ENCODE measurements at regions of chr10 and their contacts with region 1.

Region 1: GRCh38 chr10:97498076-97498840 is at the start of gene MMS19:
- DNase-seq: peak; percentile 99 to 100
- H3K4me3 ChIP-seq: peak within 1 kb of the TSS; percentile 71
- H3K4me3 Mint-ChIP-seq: peak within 1 kb of the TSS; percentile 91
- H3K27ac Mint-ChIP-seq: peak within 1 kb of the TSS; percentile 91
- H3K4me1 ChIP-seq: peaks cover 23% of the 10 kb centered on the region
- H3K4me1 Mint-ChIP-seq: peaks cover 25% of the 10 kb centered on the region
- H3K27me3 ChIP-seq: no peaks in the 10 kb centered on the region
- H3K27me3 Mint-ChIP-seq: no peaks in the 10 kb centered on the region
- CTCF ChIP-seq: no peak
- total RNA-seq, gene MMS19: 105 and 112 TPM in 2 replicates

Region 2: DNA sequence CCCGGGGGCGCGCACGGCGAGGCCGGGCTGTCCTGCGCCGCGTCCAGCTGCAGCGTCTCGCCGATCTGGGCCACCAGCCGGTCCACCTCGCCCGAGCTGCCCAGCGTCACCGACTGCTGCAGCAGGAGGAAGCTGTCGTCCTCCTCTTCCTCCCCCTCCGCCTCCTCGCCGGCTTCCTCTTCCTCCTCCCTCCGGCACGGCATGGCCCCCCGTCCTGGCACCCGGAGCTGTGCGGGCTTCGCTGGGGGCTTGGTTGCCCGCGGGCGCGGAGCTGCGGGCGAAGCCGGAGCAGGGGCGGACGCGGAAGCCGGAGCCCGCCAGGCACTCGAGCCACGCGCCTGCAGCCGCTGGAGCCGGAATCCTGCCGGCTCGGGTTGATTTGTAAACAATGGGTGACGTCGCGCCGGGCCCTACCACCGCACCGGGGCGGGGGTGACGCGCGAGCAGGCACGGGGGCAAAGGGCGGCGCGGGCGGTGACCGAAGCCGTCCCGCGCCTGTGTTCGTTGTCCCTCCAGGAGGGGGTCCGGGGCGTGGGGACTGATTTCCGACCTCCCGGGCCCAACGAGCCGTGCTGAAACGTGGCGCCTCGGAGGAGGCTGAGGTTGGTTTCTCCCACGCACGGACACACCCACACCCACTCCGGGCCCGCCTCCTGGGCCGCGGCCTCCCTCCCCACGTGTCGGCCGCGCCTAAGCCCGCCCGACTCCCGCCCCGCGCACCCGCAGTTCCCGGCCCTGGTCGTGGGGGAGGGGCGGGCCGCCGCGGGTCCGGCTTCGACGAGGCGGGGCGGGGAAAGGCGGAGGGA is 163.7 kb before region 1 on chr10 and contains the start of gene FRAT2:
- CTCF ChIA-PET with region 1: no interaction called
- POLR2A ChIA-PET with region 1: interaction called, 3 read pairs
- intact Hi-C with region 1: loop called (anchors 5 kb)
- DNase-seq: peak; percentile 91 to 93
- H3K4me3 ChIP-seq: peak within 1 kb of the TSS; percentile 99
- H3K4me3 Mint-ChIP-seq: peak within 1 kb of the TSS; percentile 78
- H3K27ac Mint-ChIP-seq: peak within 1 kb of the TSS; percentile 92
- H3K4me1 ChIP-seq: peaks cover 21% of the 10 kb centered on the region
- H3K4me1 Mint-ChIP-seq: peaks cover 27% of the 10 kb centered on the region
- H3K27me3 ChIP-seq: no peaks in the 10 kb centered on the region
- H3K27me3 Mint-ChIP-seq: no peaks in the 10 kb centered on the region
- CTCF ChIP-seq: no peak
- total RNA-seq, gene FRAT2: 16.6 and 18.8 TPM in 2 replicates

Region 3: DNA sequence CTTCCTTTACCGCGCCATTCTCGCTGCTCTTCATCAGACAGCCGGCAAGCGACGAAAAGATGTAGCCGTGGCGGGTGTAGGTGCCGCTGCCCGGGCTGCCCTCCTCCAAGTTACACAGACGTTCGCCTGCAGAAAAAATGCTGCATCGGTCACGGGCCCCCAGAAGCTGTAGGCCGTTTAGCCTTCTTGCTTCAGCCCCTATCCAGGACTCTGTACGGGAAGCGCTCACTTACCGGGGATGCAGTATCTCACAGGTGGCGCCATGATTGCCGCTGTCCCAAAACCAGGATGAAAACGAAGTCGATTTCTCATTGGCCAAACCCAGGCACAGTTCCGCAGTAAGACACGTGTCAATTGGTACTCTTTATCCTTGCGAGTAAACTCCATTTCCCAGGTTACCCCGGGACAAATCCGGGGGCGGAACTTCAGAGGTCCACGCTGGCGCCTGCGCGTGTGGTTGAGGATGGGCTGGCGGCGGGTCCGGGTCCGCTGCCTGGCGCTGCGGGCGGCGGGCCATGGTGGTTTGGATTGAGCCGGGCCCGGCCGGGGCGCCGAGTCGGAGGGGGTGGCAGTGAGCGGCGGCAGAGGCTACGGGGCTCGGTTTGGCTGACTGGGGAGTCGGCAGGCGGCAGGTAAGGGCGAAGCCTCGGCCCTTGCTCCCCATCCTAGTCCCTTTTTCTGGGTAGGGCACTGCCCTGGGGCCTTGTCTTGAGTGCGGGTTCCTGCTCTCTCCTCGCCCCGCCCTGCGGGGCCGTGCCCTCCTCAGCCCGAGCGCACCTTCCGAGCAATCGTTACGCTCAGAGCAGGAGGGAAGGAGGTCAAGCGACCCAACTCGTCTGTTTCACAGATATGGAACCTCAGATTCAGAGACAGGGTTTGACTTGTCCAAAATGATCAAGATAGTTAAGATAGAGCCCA is 52.3 kb before region 1 on chr10 and contains the starts of genes EXOSC1 and ZDHHC16:
- CTCF ChIA-PET with region 1: no interaction called
- POLR2A ChIA-PET with region 1: no interaction called
- intact Hi-C with region 1: loop called (anchors 1 kb)
- DNase-seq: peak; percentile 94 to 95
- H3K4me3 ChIP-seq: peak within 1 kb of the TSS; percentile 94
- H3K4me3 Mint-ChIP-seq: peak within 1 kb of the TSS; percentile 94
- H3K27ac Mint-ChIP-seq: peak within 1 kb of the TSS; percentile 85
- H3K4me1 ChIP-seq: peaks cover 6% of the 10 kb centered on the region
- H3K4me1 Mint-ChIP-seq: no peaks in the 10 kb centered on the region
- H3K27me3 ChIP-seq: no peaks in the 10 kb centered on the region
- H3K27me3 Mint-ChIP-seq: no peaks in the 10 kb centered on the region
- CTCF ChIP-seq: peak in 1 of 2 experiments; percentile 31
- total RNA-seq, gene EXOSC1: 77.5 and 84.7 TPM in 2 replicates
- total RNA-seq, gene ZDHHC16: 43.5 and 48.3 TPM in 2 replicates

Region 4: GRCh38 chr10:97463363-97464132 is 34.7 kb before region 1 on chr10:
- CTCF ChIA-PET with region 1: interaction called, 5 read pairs
- POLR2A ChIA-PET with region 1: no interaction called
- intact Hi-C with region 1: loop called (anchors 1 kb)
- DNase-seq: peak; percentile 78 to 80
- H3K4me3 ChIP-seq: no peak overlapping the region
- H3K4me3 Mint-ChIP-seq: no peak overlapping the region
- H3K27ac Mint-ChIP-seq: peak overlapping the region; percentile 39
- H3K4me1 ChIP-seq: no peaks in the 10 kb centered on the region
- H3K4me1 Mint-ChIP-seq: no peaks in the 10 kb centered on the region
- H3K27me3 ChIP-seq: no peaks in the 10 kb centered on the region
- H3K27me3 Mint-ChIP-seq: no peaks in the 10 kb centered on the region
- CTCF ChIP-seq: peak; percentile 89 to 90

Region 5: GRCh38 chr10:97553575-97554031 is 55.3 kb after region 1 on chr10:
- CTCF ChIA-PET with region 1: interaction called, 7 read pairs
- POLR2A ChIA-PET with region 1: no interaction called
- intact Hi-C with region 1: loop called (anchors 1 kb)
- DNase-seq: peak; percentile 70 to 74
- H3K4me3 ChIP-seq: no peak overlapping the region
- H3K4me3 Mint-ChIP-seq: no peak overlapping the region
- H3K27ac Mint-ChIP-seq: no peak overlapping the region
- H3K4me1 ChIP-seq: peaks cover 6% of the 10 kb centered on the region; the same call in 1 of the 2 replicates
- H3K4me1 Mint-ChIP-seq: peaks cover 12% of the 10 kb centered on the region
- H3K27me3 ChIP-seq: no peaks in the 10 kb centered on the region
- H3K27me3 Mint-ChIP-seq: no peaks in the 10 kb centered on the region
- CTCF ChIP-seq: peak; percentile 72 to 94

Region 6: DNA sequence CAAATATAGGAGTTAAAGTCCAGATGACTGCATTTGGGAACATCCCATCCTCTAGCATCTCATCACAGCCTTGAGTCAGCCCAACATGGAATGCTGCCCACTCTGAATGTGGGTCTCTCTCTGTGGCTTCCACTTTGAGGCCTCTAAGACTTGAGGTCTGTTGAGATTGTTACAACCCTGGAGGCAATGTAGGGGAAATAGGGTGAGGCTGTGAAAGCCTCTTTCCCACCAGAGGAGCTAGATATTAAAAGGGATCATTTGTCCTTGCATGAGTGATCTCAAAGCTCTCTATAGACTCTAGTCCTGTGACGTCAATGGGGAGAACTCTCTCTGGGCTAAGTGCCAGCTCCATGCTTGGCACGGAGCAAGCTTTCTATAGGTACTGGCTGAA is 345.0 kb after region 1 on chr10:
- CTCF ChIA-PET with region 1: no interaction called
- POLR2A ChIA-PET with region 1: no interaction called
- intact Hi-C with region 1: no loop called
- DNase-seq: no peak
- H3K4me3 ChIP-seq: no peak overlapping the region
- H3K4me3 Mint-ChIP-seq: no peak overlapping the region
- H3K27ac Mint-ChIP-seq: no peak overlapping the region
- H3K4me1 ChIP-seq: 0 out of 2 replicates have a peak, but pooled peaks cover 11% of the 10 kb centered on the region
- H3K4me1 Mint-ChIP-seq: no peaks in the 10 kb centered on the region
- H3K27me3 ChIP-seq: no peaks in the 10 kb centered on the region
- H3K27me3 Mint-ChIP-seq: peaks cover 3% of the 10 kb centered on the region
- CTCF ChIP-seq: no peak